A673 (cell line): ENCODE measurements at regions of chr9 and their contacts with region 1.

Region 1: GRCh38 chr9:29701551-29701950 is 2128.3 kb upstream of the C9orf72 start:
- DNase-seq: peak; percentile 39
- H3K4me3 ChIP-seq: no peak overlapping the region
- H3K27ac ChIP-seq: peak overlapping the region; percentile 66
- H3K4me1 ChIP-seq: peaks cover 11% of the 10 kb centered on the region
- H3K27me3 ChIP-seq: no peaks in the 10 kb centered on the region
- CTCF ChIP-seq: no peak

Region 2: GRCh38 chr9:29245351-29245750 is 456.2 kb before region 1 on chr9:
- CTCF ChIA-PET with region 1: no interaction called
- POLR2A ChIA-PET with region 1: no interaction called
- intact Hi-C with region 1: no loop called
- DNase-seq: peak; percentile 60
- H3K4me3 ChIP-seq: no peak overlapping the region
- H3K27ac ChIP-seq: no peak overlapping the region
- H3K4me1 ChIP-seq: peaks cover 32% of the 10 kb centered on the region
- H3K27me3 ChIP-seq: no peaks in the 10 kb centered on the region
- CTCF ChIP-seq: no peak

Region 3: DNA sequence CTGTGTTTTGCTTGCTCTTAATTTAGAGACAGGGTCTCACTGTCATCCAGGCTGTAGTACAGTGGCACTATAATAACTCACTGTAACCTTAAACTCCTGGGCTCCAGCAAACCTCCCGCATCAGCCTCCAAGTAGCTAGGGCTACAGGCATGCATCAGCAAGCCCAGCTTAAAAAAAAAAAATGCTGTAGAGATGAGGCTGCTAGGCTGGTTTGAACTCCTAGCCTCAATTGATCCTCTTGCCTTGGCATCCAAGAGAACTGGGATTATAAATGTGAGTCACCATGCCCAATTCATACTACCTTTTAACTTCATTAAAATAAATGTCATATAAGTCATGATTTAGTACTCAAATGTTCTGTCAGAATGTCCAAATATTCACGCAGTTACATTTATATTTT is 67.5 kb after region 1 on chr9:
- CTCF ChIA-PET with region 1: no interaction called
- POLR2A ChIA-PET with region 1: no interaction called
- intact Hi-C with region 1: loop called (anchors 10 kb)
- DNase-seq: no peak
- H3K4me3 ChIP-seq: no peak overlapping the region
- H3K27ac ChIP-seq: no peak overlapping the region
- H3K4me1 ChIP-seq: no peaks in the 10 kb centered on the region
- H3K27me3 ChIP-seq: no peaks in the 10 kb centered on the region
- CTCF ChIP-seq: no peak